ENCODE measurements at regions of chr11 and their contacts with region 1.

Region 1: GRCh38 chr11:33987975-33988580 is 63.5 kb upstream of the CAPRIN1 start:
- DNase-seq: peak; percentile 34 to 88 (median 65)
- ATAC-seq: peak; percentile 75 to 86 (median 76)
- H3K4me3 ChIP-seq: no peak overlapping the region
- H3K4me3 Mint-ChIP-seq: no peak overlapping the region
- H3K27ac ChIP-seq: no peak overlapping the region
- H3K27ac Mint-ChIP-seq: no peak overlapping the region
- H3K4me1 ChIP-seq: peaks cover 0 to 6% of the 10 kb centered on the region in 2 experiments
- H3K4me1 Mint-ChIP-seq: peaks cover 4 to 8% (median 6%) of the 10 kb centered on the region in 3 donors
- H3K27me3 ChIP-seq: peaks cover 0 to 15% of the 10 kb centered on the region in 2 experiments
- H3K27me3 Mint-ChIP-seq: peaks cover 0 to 6% of the 10 kb centered on the region in 2 donors

Region 2: GRCh38 chr11:33847251-33847650 is 140.8 kb before region 1 on chr11:
- CTCF ChIA-PET with region 1: no interaction called
- POLR2A ChIA-PET with region 1: no interaction called
- DNase-seq: no peak
- ATAC-seq: no peak
- H3K4me3 ChIP-seq: no peak overlapping the region
- H3K4me3 Mint-ChIP-seq: no peak overlapping the region
- H3K27ac ChIP-seq: no peak overlapping the region
- H3K27ac Mint-ChIP-seq: no peak overlapping the region
- H3K4me1 ChIP-seq: no peaks in the 10 kb centered on the region
- H3K4me1 Mint-ChIP-seq: no peaks in the 10 kb centered on the region
- H3K27me3 ChIP-seq: peaks cover 0 to 8% of the 10 kb centered on the region in 2 experiments
- H3K27me3 Mint-ChIP-seq: peaks cover 28 to 41% of the 10 kb centered on the region in 2 donors

Region 3: DNA sequence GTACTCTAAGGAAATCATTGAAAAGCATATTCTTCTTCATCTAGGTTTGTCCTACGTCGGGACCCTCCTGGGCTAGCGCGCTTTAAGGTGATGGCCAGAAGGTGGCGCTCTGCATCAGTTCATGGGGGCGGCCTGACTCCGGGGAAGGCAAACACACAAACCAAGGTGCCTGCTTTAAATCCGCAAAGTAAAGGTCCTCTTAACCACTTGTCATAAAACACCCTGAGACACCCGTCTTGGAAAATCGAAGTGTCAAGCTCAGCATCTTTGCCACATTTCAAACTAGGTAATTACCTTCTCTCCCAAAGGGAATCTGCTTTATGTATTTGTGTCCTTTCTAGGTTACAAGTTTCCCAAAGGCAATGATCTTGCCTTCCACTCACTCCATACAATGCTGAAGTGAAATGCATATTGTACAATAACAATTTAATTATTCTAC is 130.1 kb before region 1 on chr11:
- CTCF ChIA-PET with region 1: interaction called, 13 to 18 read pairs
- POLR2A ChIA-PET with region 1: no interaction called
- DNase-seq: peak; percentile 30 to 82 (median 64)
- ATAC-seq: peak; percentile 71 to 85 (median 74)
- H3K4me3 ChIP-seq: no peak overlapping the region
- H3K4me3 Mint-ChIP-seq: no peak overlapping the region
- H3K27ac ChIP-seq: no peak overlapping the region
- H3K27ac Mint-ChIP-seq: no peak overlapping the region
- H3K4me1 ChIP-seq: no peaks in the 10 kb centered on the region
- H3K4me1 Mint-ChIP-seq: no peaks in the 10 kb centered on the region
- H3K27me3 ChIP-seq: peaks cover 0 to 45% of the 10 kb centered on the region in 2 experiments
- H3K27me3 Mint-ChIP-seq: peaks cover 30 to 45% of the 10 kb centered on the region in 2 donors

Region 4: DNA sequence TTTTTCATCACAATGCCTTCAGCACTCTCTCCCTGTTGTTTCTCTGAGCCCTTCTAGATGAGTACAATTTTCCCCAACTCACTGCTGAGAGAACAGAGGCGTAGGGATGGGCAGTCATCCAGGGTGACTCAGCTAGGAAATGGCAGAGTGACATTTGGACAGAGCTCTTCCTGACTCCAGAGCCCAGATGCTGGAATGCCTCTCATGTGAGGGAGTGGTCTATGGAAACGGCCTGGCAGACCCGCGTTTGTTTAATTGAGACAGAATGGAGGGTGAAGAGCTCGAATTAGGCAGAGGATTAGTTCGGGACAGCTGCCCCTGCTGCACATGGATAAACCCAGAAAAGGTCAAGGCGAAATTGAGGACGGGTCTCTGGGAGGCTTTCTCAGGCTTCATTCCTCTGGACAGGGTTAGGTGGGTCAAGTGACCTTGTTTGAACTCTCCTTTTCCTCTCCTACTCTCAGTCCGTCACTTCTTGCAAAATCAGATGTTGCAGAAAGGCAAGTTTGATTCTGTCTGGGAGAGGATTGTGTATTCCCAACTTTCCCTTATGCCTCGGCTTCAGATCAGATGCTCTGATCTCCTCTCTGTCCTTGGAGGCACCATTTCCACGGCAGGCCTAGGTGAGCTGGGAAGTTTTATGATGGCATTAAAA is 88.6 kb before region 1 on chr11:
- CTCF ChIA-PET with region 1: no interaction called
- POLR2A ChIA-PET with region 1: no interaction called
- DNase-seq: no peak
- ATAC-seq: no peak
- H3K4me3 ChIP-seq: no peak overlapping the region
- H3K4me3 Mint-ChIP-seq: no peak overlapping the region
- H3K27ac ChIP-seq: no peak overlapping the region
- H3K27ac Mint-ChIP-seq: no peak overlapping the region
- H3K4me1 ChIP-seq: peaks cover under 1 to 10% of the 10 kb centered on the region in 2 experiments
- H3K4me1 Mint-ChIP-seq: peaks cover 9 to 13% (median 12%) of the 10 kb centered on the region in 3 donors
- H3K27me3 ChIP-seq: peaks cover 0 to 29% of the 10 kb centered on the region in 2 experiments
- H3K27me3 Mint-ChIP-seq: peaks cover 39 to 57% of the 10 kb centered on the region in 2 donors

Region 5: GRCh38 chr11:33976495-33977199 is 11.4 kb before region 1 on chr11:
- CTCF ChIA-PET with region 1: interaction called, 7 to 10 read pairs
- POLR2A ChIA-PET with region 1: no interaction called
- DNase-seq: no peak
- ATAC-seq: no peak
- H3K4me3 ChIP-seq: no peak overlapping the region
- H3K4me3 Mint-ChIP-seq: no peak overlapping the region
- H3K27ac ChIP-seq: no peak overlapping the region
- H3K27ac Mint-ChIP-seq: no peak overlapping the region
- H3K4me1 ChIP-seq: no peaks in the 10 kb centered on the region
- H3K4me1 Mint-ChIP-seq: no peaks in the 10 kb centered on the region
- H3K27me3 ChIP-seq: peaks cover 0 to 3% of the 10 kb centered on the region in 2 experiments
- H3K27me3 Mint-ChIP-seq: peaks cover 5 to 11% of the 10 kb centered on the region in 2 donors

Measured in T-cell (primary cell).